CD14-positive monocyte (primary cell): ENCODE measurements at regions of chr11 and their contacts with region 1.

Region 1: GRCh38 chr11:82701847-82702520 is 31.7 kb downstream of the FAM181B start:
- DNase-seq: peak in 1 of 3 donors; percentile 1
- H3K4me3 ChIP-seq: no peak overlapping the region
- H3K4me3 Mint-ChIP-seq: no peak overlapping the region
- H3K27ac ChIP-seq: no peak overlapping the region
- H3K27ac Mint-ChIP-seq: no peak overlapping the region
- H3K4me1 ChIP-seq: no peaks in the 10 kb centered on the region
- H3K4me1 Mint-ChIP-seq: no peaks in the 10 kb centered on the region
- H3K27me3 ChIP-seq: no peaks in the 10 kb centered on the region
- H3K27me3 Mint-ChIP-seq: peaks cover 3 to 6% (median 4%) of the 10 kb centered on the region in 3 donors
- CTCF ChIP-seq: peak; percentile 77

Region 2: GRCh38 chr11:81644239-81644840 is 1057.6 kb before region 1 on chr11:
- intact Hi-C with region 1: loop called (anchors 5 kb)
- DNase-seq: no peak
- H3K4me3 ChIP-seq: no peak overlapping the region
- H3K4me3 Mint-ChIP-seq: no peak overlapping the region
- H3K27ac ChIP-seq: no peak overlapping the region
- H3K27ac Mint-ChIP-seq: no peak overlapping the region
- H3K4me1 ChIP-seq: no peaks in the 10 kb centered on the region
- H3K4me1 Mint-ChIP-seq: no peaks in the 10 kb centered on the region
- H3K27me3 ChIP-seq: peaks cover 2 to 9% of the 10 kb centered on the region in 2 donors
- H3K27me3 Mint-ChIP-seq: peaks cover 5 to 9% (median 8%) of the 10 kb centered on the region in 3 donors
- CTCF ChIP-seq: peak; percentile 69

Region 3: GRCh38 chr11:82494988-82495432 is 207.0 kb before region 1 on chr11:
- intact Hi-C with region 1: loop called in 1 of 2 experiments (anchors 5 kb)
- DNase-seq: peak in 2 of 3 donors; percentile 20 to 35
- H3K4me3 ChIP-seq: no peak overlapping the region
- H3K4me3 Mint-ChIP-seq: no peak overlapping the region
- H3K27ac ChIP-seq: no peak overlapping the region
- H3K27ac Mint-ChIP-seq: peak overlapping the region in 1 of 7 donors; percentile 23
- H3K4me1 ChIP-seq: no peaks in the 10 kb centered on the region
- H3K4me1 Mint-ChIP-seq: no peaks in the 10 kb centered on the region
- H3K27me3 ChIP-seq: no peaks in the 10 kb centered on the region
- H3K27me3 Mint-ChIP-seq: peaks cover 0 to 5% (median 3%) of the 10 kb centered on the region in 3 donors
- CTCF ChIP-seq: peak; percentile 61

Region 4: GRCh38 chr11:82546661-82547557 is 155.1 kb before region 1 on chr11:
- intact Hi-C with region 1: no loop called
- DNase-seq: peak; percentile 12 to 79 (median 17)
- H3K4me3 ChIP-seq: no peak overlapping the region
- H3K4me3 Mint-ChIP-seq: peak overlapping the region in 1 of 2 donors; percentile 46
- H3K27ac ChIP-seq: peak overlapping the region; percentile 35 to 44
- H3K27ac Mint-ChIP-seq: peak overlapping the region in 6 of 7 donors; percentile 16 to 70 (median 50)
- H3K4me1 ChIP-seq: peaks cover 25 to 27% of the 10 kb centered on the region in 2 donors
- H3K4me1 Mint-ChIP-seq: peaks cover 32% of the 10 kb centered on the region
- H3K27me3 ChIP-seq: no peaks in the 10 kb centered on the region
- H3K27me3 Mint-ChIP-seq: peaks cover 0 to 3% (median 0%) of the 10 kb centered on the region in 3 donors
- CTCF ChIP-seq: no peak